Panc1 (cell line): ENCODE measurements at regions of chr17 and their contacts with region 1.

Region 1: DNA sequence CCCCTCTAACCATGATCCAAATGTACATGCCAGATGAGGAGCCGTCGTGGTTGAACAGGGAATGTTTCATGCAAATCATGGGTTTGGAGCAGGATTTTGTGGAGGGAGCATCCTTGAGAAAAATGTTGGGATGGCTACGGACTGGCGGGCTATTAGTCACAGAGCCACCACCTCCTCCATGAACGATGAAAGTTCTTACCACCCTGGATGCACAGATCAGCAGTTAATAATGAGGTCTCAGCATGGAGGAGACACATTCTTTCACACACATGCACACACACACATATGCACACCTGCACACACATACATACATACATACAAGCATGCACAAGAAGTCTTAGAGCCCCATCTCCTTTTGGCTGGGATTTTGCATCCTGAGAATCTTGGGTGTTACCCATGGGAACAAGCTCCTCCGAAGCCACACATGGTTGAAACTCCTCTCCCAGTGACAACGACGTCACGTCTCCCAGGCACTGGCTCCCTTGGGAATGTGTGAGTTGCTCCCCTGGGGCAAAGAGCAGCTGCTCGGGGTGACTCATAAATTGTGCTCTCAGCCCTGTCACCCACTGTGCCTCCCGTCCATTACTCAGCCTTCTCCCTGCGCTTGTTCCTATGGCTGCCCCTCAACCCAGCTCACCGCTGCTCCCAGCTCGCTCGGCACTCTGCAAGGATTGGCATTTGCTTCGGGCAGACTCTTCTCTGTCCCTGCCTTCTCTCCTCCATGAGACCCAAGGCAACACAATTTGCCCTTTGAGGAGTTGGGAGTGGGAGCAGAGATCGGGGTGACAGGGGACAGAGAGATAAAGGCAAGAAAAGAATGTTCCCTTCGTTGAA is 344.6 kb downstream of the SOX9 start:
- DNase-seq: peak; percentile 81
- ATAC-seq: peak; percentile 91
- H3K4me3 ChIP-seq: peak overlapping the region; percentile 19 to 56
- H3K27ac ChIP-seq: peak overlapping the region; percentile 98
- H3K4me1 ChIP-seq: peaks cover 98% of the 10 kb centered on the region
- H3K27me3 ChIP-seq: no peaks in the 10 kb centered on the region
- CTCF ChIP-seq: no peak

Region 2: GRCh38 chr17:72430611-72431432 is 34.6 kb before region 1 on chr17:
- CTCF ChIA-PET with region 1: no interaction called
- POLR2A ChIA-PET with region 1: no interaction called
- in situ Hi-C with region 1: no loop called
- intact Hi-C with region 1: no loop called
- DNase-seq: no peak
- ATAC-seq: no peak
- H3K4me3 ChIP-seq: no peak overlapping the region
- H3K27ac ChIP-seq: peak overlapping the region; percentile 78
- H3K4me1 ChIP-seq: peaks cover 97% of the 10 kb centered on the region
- H3K27me3 ChIP-seq: no peaks in the 10 kb centered on the region
- CTCF ChIP-seq: peak; percentile 80

Region 3: DNA sequence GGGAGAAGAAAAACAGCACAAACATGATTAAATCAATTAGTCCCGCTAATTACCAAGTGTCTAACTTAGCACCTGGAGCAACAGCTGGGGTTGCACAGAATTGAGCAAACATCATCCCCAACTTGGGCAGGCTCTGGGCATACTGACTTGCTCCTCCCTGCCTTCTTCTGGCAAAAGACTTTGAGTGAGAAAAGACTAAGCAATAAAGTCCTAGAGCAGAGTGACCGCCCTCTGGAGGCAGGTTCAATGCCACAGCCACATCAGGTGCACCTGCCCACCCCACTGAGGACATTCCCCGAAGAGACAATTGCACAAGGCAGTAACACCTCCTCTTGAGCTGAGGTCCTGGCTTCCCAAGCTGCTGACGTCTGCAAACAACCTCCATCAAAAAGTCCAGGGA is 13.7 kb after region 1 on chr17:
- CTCF ChIA-PET with region 1: no interaction called
- POLR2A ChIA-PET with region 1: interaction called, 18 read pairs
- in situ Hi-C with region 1: no loop called
- intact Hi-C with region 1: no loop called
- DNase-seq: no peak
- ATAC-seq: peak; percentile 46
- H3K4me3 ChIP-seq: no peak overlapping the region
- H3K27ac ChIP-seq: peak overlapping the region; percentile 94
- H3K4me1 ChIP-seq: peaks cover 60% of the 10 kb centered on the region
- H3K27me3 ChIP-seq: no peaks in the 10 kb centered on the region
- CTCF ChIP-seq: peak; percentile 78